Natural killer cell (primary cell): ENCODE measurements at regions of chr16 and their contacts with region 1.

Region 1: DNA sequence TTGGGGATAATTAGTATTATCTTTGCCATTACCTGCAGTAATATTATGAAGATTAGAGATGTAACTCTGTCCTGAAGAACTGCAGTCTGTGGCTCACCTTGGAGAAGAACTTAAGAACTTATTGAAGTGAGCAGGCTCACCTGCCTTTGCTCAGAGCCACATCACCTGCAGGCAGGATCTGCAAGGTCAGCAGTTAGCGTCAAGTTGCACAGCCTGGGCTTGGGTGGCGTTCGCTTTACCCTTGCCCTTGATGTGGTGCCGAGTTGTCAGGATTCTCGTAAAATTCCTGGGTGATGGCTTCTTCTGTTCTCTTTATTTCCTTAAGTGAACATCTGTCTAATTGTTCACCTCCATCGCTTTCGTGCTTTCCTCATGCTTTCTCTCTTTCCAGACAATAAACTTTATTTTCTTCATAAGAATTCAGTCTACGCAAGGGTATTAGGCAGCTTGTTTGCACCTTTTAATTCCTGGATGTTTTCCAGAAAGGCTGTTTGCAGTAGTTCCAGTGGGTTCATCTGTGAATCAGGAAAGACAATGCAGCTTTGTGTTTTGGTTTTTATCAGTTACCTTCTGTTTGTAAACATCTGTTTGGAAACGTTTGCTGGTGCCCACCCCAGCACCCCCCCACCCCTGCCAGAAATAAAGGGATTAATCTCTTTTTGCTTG is 254.3 kb downstream of the WWOX start:
- DNase-seq: no peak
- ATAC-seq: no peak
- H3K4me3 ChIP-seq: no peak overlapping the region
- H3K4me3 Mint-ChIP-seq: no peak overlapping the region
- H3K27ac ChIP-seq: no peak overlapping the region
- H3K27ac Mint-ChIP-seq: no peak overlapping the region
- H3K4me1 ChIP-seq: no peaks in the 10 kb centered on the region
- H3K4me1 Mint-ChIP-seq: no peaks in the 10 kb centered on the region
- H3K27me3 ChIP-seq: no peaks in the 10 kb centered on the region
- H3K27me3 Mint-ChIP-seq: no peaks in the 10 kb centered on the region
- CTCF ChIP-seq: no peak

Region 2: DNA sequence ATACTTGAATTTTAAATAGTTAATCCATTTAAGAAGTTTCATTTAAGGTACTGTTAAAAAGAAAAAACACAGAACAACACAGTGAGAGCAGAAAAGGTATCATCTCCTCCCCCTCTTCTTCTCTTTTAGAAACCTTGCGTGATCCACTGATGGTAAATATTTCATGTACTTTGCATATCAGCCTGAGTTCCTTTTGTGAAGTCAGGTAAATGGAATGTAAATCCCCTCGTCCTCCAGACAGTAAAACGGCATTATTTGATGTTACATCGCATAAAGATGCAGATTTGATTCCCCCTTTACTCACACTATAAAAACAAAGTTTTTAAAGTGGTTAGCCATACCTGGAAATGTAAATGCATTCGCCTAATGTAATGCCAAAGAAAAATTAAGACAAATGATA is 19.9 kb before region 1 on chr16:
- intact Hi-C with region 1: loop called (anchors 1 kb)
- DNase-seq: no peak
- ATAC-seq: no peak
- H3K4me3 ChIP-seq: no peak overlapping the region
- H3K4me3 Mint-ChIP-seq: no peak overlapping the region
- H3K27ac ChIP-seq: no peak overlapping the region
- H3K27ac Mint-ChIP-seq: no peak overlapping the region
- H3K4me1 ChIP-seq: no peaks in the 10 kb centered on the region
- H3K4me1 Mint-ChIP-seq: peaks cover 0 to 6% of the 10 kb centered on the region in 2 donors
- H3K27me3 ChIP-seq: no peaks in the 10 kb centered on the region
- H3K27me3 Mint-ChIP-seq: no peaks in the 10 kb centered on the region
- CTCF ChIP-seq: no peak

Region 3: DNA sequence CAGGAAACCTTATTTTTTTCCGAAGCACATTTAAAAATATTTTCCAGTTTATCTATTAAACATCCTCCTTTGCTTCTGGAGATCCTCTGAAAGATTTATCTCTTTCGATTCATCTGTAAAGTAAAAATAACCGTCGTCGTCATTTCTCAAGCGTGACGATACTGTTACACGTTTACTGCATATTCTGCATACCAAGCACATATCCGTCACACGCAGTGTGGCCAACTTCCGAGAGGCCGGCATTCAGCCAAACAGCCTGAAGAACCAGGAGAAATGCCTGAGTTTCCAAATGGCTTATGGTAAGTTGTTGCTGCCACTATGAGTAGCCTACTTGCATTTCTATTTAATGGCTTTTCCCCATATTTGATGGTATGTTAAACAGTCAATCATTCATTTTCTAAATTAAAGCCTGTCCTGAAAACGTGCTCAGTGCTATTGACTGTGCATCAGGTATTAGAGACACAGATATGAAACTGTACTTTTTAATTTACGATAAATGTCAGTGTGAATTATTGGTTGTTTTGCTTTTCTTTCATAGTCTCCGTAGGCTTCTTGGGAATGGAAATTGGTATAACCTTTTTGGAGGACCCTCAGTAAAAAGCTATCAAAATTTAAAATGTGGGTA is 21.4 kb after region 1 on chr16:
- intact Hi-C with region 1: no loop called
- DNase-seq: no peak
- ATAC-seq: no peak
- H3K4me3 ChIP-seq: no peak overlapping the region
- H3K4me3 Mint-ChIP-seq: no peak overlapping the region
- H3K27ac ChIP-seq: no peak overlapping the region
- H3K27ac Mint-ChIP-seq: no peak overlapping the region
- H3K4me1 ChIP-seq: no peaks in the 10 kb centered on the region
- H3K4me1 Mint-ChIP-seq: no peaks in the 10 kb centered on the region
- H3K27me3 ChIP-seq: no peaks in the 10 kb centered on the region
- H3K27me3 Mint-ChIP-seq: no peaks in the 10 kb centered on the region
- CTCF ChIP-seq: no peak